ENCODE measurements at regions of chr2 and their contacts with region 1.

Region 1: GRCh38 chr2:237122214-237122666 is 36.6 kb downstream of the COPS8 start:
- DNase-seq: peak; percentile 87
- ATAC-seq: peak; percentile 94
- H3K4me3 ChIP-seq: no peak overlapping the region
- H3K27ac ChIP-seq: peak overlapping the region; percentile 53; the same call in 1 of the 2 replicates
- H3K4me1 ChIP-seq: peaks cover 13% of the 10 kb centered on the region
- H3K27me3 ChIP-seq: no peaks in the 10 kb centered on the region
- CTCF ChIP-seq: peak; percentile 84
- POLR2A ChIP-seq: 0 out of 2 replicates have a peak, but pooled peaks have one; percentile 34
- RAD21 ChIP-seq: peak; percentile 93

Region 2: GRCh38 chr2:237134321-237135258 is 12.3 kb after region 1 on chr2:
- CTCF ChIA-PET with region 1: interaction called, 13 read pairs
- POLR2A ChIA-PET with region 1: no interaction called
- dilution Hi-C with region 1: no loop called
- in situ Hi-C with region 1: no loop called
- intact Hi-C with region 1: no loop called
- DNase-seq: no peak
- ATAC-seq: peak; percentile 35; the same call in 1 of the 2 replicates
- H3K4me3 ChIP-seq: no peak overlapping the region
- H3K27ac ChIP-seq: peak overlapping the region; percentile 53; the same call in 1 of the 2 replicates
- H3K4me1 ChIP-seq: peaks cover 6% of the 10 kb centered on the region; the same call in 1 of the 2 replicates
- H3K27me3 ChIP-seq: no peaks in the 10 kb centered on the region
- CTCF ChIP-seq: no peak
- POLR2A ChIP-seq: no peak
- RAD21 ChIP-seq: no peak